ENCODE measurements at regions of chr10 and their contacts with region 1.

Region 1: GRCh38 chr10:70461215-70461986 is 17.2 kb upstream of the PALD1 start:
- DNase-seq: peak; percentile 8
- H3K4me3 ChIP-seq: no peak overlapping the region
- H3K27ac ChIP-seq: no peak overlapping the region
- H3K27me3 ChIP-seq: peaks cover 16% of the 10 kb centered on the region
- CTCF ChIP-seq: peak; percentile 91

Region 2: DNA sequence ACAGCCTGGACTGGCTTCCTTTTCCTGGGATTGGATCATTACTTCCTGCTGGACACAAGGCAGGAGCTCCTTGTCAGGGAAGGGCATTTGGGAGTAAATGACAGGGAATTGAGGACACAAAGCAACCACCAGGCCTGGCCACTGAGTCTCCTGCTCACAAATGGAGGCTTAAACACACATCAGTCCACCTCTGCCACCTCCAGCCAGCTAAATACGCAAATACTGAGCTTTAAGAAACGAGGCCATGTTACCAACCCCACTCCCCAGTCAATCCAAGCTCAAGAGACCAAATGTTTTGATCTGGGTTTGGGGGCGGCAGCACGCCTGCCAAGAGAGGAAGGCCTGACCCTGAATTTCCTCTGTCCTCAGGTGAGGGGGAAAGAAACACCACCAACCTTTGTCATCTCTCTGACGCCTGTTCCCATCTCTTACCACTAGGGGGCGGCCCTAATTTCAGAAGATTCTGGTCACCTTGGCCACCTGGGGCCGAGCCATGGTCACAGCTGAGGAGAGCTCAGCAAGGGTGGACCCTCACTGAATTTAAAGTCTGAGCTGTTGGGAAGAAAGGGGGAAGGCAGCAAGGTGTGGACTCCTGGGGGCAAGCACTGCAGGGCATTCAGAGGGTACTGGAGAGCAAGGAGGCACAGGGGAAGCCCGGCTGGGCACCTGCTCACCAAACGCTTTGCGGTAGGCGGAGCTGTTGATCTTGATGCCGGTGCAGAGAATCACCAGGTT is 345.3 kb before region 1 on chr10:
- CTCF ChIA-PET with region 1: no interaction called
- POLR2A ChIA-PET with region 1: no interaction called
- DNase-seq: no peak
- H3K4me3 ChIP-seq: no peak overlapping the region
- H3K27ac ChIP-seq: no peak overlapping the region
- H3K27me3 ChIP-seq: no peaks in the 10 kb centered on the region
- CTCF ChIP-seq: peak; percentile 90

Region 3: DNA sequence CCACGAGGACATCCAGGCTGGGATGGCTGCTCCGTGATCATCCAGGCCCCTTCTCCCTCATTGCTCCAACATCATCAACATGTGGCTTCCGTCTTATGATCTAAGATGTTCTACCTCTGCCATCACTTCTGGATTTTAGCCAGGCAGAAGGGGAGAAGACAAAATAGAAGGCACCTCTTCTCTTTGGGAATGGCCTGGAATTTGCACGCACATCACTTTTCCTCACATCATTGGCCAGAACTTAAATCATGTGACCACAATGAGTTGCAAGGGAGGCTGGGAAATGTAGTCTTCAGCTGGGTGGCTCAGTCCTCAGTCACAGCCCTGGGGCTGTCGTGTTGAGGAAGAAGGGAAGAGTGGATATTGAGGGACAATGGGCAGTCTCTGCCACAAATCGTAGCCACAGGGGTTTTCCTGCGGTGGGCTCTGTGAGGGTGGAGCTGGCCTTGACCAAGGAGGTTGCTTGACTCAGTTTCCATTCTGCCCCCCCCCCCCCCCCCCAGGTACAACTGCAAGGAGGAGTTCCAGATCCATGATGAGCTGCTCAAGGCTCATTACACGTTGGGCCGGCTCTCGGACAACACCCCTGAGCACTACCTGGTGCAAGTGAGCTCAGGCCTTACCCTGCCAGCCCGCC is 67.4 kb after region 1 on chr10:
- CTCF ChIA-PET with region 1: interaction called, 10 read pairs
- POLR2A ChIA-PET with region 1: no interaction called
- DNase-seq: no peak
- H3K4me3 ChIP-seq: no peak overlapping the region
- H3K27ac ChIP-seq: no peak overlapping the region
- H3K27me3 ChIP-seq: peaks cover 11% of the 10 kb centered on the region
- CTCF ChIP-seq: no peak

Region 4: GRCh38 chr10:70540089-70540788 is 78.8 kb after region 1 on chr10:
- CTCF ChIA-PET with region 1: interaction called, 17 read pairs
- POLR2A ChIA-PET with region 1: no interaction called
- DNase-seq: no peak
- H3K4me3 ChIP-seq: no peak overlapping the region
- H3K27ac ChIP-seq: no peak overlapping the region
- H3K27me3 ChIP-seq: peaks cover 23% of the 10 kb centered on the region
- CTCF ChIP-seq: peak; percentile 80